ENCODE measurements at regions of chr5 and their contacts with region 1.

Region 1: DNA sequence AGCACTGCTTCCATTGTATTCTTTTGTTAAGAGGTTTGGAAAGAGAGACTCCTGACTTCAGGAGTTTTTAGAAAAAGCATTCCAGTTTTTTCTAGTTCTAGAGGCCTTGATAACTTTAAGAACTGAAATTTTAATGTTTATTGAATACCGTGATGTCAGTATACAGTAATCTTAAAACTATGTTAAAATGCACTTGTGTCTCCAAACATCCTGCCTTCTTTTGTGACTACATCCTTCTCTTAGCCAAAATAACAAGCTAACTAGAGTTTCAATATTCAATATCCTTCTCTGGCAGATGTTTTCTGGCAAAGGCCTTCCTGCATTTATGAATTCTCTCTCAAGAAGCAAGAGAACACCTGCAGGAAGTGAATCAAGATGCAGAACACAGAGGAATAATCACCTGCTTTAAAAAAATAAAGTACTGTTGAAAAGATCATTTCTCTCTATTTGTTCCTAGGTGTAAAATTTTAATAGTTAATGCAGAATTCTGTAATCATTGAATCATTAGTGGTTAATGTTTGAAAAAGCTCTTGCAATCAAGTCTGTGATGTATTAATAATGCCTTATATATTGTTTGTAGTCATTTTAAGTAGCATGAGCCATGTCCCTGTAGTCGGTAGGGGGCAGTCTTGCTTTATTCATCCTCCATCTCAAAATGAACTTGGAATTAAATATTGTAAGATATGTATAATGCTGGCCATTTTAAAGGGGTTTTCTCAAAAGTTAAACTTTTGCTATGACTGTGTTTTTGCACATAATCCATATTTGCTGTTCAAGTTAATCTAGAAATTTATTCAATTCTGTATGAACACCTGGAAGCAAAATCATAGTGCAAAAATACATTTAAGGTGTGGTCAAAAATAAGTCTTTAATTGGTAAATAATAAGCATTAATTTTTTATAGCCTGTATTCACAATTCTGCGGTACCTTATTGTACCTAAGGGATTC is 43.1 kb downstream of the NDFIP1 start:
- DNase-seq: no peak
- H3K4me3 ChIP-seq: no peak overlapping the region
- H3K27me3 ChIP-seq: no peaks in the 10 kb centered on the region
- CTCF ChIP-seq: peak; percentile 78

Region 2: GRCh38 chr5:141430332-141431113 is 721.2 kb before region 1 on chr5 and contains the start of gene PCDHGA12:
- CTCF ChIA-PET with region 1: no interaction called
- POLR2A ChIA-PET with region 1: no interaction called
- DNase-seq: no peak
- H3K4me3 ChIP-seq: peak within 1 kb of the TSS; percentile 39
- H3K27me3 ChIP-seq: no peaks in the 10 kb centered on the region
- CTCF ChIP-seq: peak; percentile 59
- polyA plus RNA-seq, gene PCDHGA12: 6.1 and 7.9 TPM in 2 replicates

Region 3: GRCh38 chr5:141878711-141879425 is 272.8 kb before region 1 on chr5:
- CTCF ChIA-PET with region 1: no interaction called
- POLR2A ChIA-PET with region 1: no interaction called
- DNase-seq: peak; percentile 26
- H3K4me3 ChIP-seq: peak overlapping the region; percentile 14
- H3K27me3 ChIP-seq: peaks cover 63% of the 10 kb centered on the region
- CTCF ChIP-seq: peak; percentile 98

Region 4: GRCh38 chr5:142548739-142549275 is 397.1 kb after region 1 on chr5:
- CTCF ChIA-PET with region 1: interaction called, 75 read pairs
- POLR2A ChIA-PET with region 1: no interaction called
- DNase-seq: peak; percentile 85
- H3K4me3 ChIP-seq: no peak overlapping the region
- H3K27me3 ChIP-seq: no peaks in the 10 kb centered on the region
- CTCF ChIP-seq: peak; percentile 84